Left colon (tissue), 2 donors: ENCODE measurements at regions of chr9 and their contacts with region 1.

Region 1: GRCh38 chr9:109817846-109818472 is 38.0 kb downstream of the PALM2AKAP2 start:
- DNase-seq: peak; percentile 40 to 59
- ATAC-seq: peak; percentile 63

Region 2: GRCh38 chr9:109574068-109574882 is 243.7 kb before region 1 on chr9:
- intact Hi-C with region 1: loop called in 1 of 2 experiments (anchors 5 kb)
- DNase-seq: peak in 1 of 2 donors; percentile 9
- ATAC-seq: peak; percentile 65

Region 3: GRCh38 chr9:109705515-109705914 is 112.4 kb before region 1 on chr9:
- intact Hi-C with region 1: no loop called
- DNase-seq: no peak
- ATAC-seq: peak; percentile 29

Region 4: DNA sequence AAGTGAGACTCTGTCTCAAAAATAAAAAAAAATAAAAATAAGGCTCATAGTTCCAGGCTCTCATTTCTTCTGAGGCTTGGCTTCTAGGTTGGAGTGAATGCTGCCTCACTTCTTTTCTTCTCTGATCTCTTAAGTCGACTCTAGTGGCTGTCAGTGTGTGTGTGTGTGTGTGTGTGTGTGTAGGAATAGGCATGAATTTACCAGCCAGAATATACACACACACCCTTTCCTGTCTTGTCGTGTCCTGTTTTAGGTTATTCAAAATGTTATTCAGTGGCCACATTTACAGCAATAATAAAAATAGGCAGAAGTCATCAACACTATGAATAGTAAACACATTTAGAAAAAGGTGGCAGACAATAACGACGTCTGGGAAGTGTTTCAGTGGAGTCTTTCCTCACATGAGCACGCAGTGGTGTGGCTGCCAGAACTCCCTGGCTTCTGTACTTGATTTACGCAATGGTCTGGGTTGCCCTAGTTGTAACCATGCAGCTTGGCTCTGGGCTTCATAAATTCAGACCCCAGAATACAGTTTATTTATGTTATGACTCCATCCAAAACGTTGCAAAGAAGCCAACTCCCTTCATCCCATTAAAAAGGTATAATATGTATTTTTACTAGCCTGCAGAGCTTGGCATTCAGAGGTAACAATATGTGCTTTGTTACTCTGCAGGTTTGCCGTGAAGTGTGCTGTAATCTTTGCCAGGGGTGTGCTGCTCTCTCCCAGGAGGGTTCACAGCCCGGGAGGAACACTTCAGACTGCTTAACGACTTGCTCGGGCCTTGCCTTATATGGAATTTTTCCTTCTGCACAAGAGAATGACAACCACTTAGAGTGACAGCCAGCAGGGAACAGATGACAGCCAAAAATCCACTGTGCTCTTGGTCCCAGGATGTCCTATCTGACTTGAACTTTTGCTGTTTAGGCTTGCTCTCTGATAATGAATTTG is 72.3 kb before region 1 on chr9:
- intact Hi-C with region 1: no loop called
- DNase-seq: peak; percentile 35 to 82
- ATAC-seq: peak; percentile 96

Region 5: GRCh38 chr9:109766336-109766735 is 51.6 kb before region 1 on chr9:
- intact Hi-C with region 1: no loop called
- DNase-seq: no peak
- ATAC-seq: no peak

Region 6: GRCh38 chr9:109894921-109895758 is 77.2 kb after region 1 on chr9:
- intact Hi-C with region 1: no loop called
- DNase-seq: no peak
- ATAC-seq: no peak